ENCODE measurements at regions of chr14 and their contacts with region 1.

Region 1: DNA sequence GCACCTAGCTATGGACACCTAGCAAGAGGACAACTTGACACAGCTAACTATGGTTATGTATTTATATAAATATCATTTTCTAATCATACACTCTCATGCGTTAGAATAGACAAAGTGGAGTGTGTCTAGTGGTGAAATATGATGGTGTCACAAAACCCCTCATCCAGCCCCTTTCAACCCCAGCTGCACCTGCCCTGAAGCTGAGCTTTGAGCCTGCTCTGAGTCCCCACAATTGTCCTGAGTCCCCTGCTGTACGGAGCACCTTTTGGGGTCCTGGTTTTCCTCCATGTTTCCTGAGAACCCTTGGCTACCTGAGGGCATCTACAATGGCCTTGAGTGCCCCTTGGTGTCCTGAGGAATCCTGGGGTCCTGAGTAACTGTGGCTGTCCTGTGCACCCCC is 1072.8 kb downstream of the TMEM121 start:
- DNase-seq: no peak
- CTCF ChIP-seq: no peak

Region 2: GRCh38 chr14:106294324-106294723 is 304.9 kb before region 1 on chr14:
- CTCF ChIA-PET with region 1: no interaction called
- POLR2A ChIA-PET with region 1: no interaction called
- DNase-seq: no peak
- CTCF ChIP-seq: no peak

Region 3: DNA sequence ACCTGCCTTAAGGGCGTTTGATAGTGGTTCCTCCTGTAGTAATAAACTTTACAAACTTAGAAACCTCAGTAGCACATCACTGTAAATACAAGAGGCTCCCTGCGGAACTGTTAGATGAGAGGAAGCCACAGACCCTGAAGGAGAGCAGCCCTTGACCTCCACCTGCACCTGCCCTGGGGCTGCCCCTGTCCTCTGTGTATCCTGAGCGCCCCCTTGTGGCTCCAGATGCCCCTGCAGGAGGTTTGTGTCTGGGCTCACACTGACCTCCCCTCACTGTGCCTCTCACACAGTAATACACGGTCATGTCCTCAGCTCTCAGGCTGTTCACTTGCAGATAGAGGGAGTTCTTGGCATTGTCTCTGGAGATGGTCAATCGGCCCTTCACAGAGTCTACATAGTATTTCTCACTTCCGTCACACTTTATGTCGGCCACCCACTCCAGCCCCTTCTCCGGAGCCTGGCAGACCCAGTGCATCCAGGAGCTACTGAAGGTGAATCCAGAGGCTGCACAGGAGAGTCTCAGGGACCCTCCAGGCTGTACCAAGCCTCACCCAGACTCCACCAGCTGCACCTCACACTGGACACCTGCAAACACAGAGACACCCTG is 13.0 kb before region 1 on chr14:
- CTCF ChIA-PET with region 1: interaction called, 90 read pairs
- POLR2A ChIA-PET with region 1: no interaction called
- DNase-seq: peak; percentile 75
- CTCF ChIP-seq: peak; percentile 85

Measured in GM10248 (cell line).